Activated T-helper 2 cell treated with anti-CD3 and anti-CD28 coated beads, Interferon-gamma antibody, Interleukin-2, Interleukin-4, amounts not matched to agents 10 μg/mL and 5 μg/mL and 100 μg/mL, durations not matched to agents 14 hours and 24 hours and 36 hours (primary cell): ENCODE measurements at regions of chr6 and their contacts with region 1.

Region 1: DNA sequence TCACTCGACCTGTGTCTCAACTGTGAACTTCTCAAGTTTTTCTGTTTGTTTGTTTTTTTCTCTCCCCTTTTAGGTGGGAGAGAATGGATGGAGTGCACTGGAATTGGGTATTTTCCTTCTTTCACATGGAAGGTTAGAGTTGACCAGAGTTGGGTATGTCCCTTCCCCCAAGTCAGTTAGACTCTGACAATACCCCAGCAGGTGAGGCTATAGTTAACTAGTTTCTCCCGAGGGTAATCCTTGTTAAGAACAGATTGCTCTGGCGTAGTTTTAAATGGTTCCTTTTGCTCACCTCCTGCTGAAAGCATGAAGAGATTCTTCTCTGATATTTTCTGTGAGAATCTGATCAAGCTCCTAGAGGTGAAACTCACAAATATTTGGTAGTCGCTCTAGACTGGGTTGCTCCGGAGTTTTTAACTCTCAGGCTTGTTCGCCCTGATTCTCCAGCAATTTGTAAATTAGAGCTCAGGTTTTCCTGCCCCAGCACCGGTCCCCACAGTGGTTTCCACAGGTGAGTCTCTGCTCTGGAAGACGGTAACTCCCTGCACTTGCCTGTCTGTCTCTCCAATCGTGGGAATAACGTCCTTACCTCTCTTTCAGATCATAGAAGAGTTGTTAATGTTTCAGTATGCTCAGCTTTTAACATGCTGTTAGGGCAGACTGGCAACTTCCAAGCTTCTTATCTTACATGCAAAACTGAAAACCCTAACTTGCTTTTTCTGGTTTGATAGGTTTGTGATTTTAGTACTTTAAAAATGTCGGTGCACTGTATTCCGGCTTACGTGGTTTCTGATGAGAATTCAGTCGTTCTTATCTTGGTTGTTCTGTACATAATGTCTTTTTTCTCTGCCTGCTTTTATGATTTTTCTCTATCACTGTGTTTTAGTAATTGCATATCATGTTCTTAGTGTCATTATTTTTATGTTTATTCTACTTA is 111.2 kb upstream of the HIVEP1 start:
- DNase-seq: no peak
- H3K4me3 Mint-ChIP-seq: peak overlapping the region; percentile 20
- H3K27ac Mint-ChIP-seq: peak overlapping the region; percentile 3
- H3K4me1 Mint-ChIP-seq: peaks cover 28% of the 10 kb centered on the region
- H3K27me3 Mint-ChIP-seq: peaks cover 43% of the 10 kb centered on the region

Region 2: DNA sequence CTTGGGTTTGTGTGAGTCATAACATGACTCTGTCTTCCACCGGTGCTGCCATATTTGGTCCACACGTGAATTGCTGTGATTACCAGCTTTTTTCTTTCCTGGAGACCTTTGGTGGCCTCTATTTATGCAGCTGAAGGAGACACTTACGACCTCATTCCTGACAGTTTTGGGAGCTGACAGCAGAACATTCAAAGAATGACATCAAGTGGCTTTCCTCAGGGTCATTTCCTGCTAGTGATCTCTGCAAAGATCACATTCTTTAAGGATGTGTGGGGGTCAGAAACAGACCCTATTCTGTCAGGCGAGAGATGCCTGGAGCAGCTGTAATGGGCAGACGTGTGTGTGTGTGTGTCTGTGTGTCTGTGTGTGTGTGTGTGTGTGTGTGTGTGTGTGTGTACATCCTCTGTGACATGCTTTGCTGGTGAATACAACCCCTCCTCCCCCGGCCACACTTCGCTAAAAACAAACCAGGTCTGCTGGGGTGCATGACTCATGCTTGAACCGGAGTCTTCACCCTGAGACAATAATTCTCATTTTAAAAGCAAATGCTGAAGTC is 247.8 kb before region 1 on chr6:
- intact Hi-C with region 1: loop called (anchors 5 kb)
- DNase-seq: peak; percentile 31
- H3K4me3 Mint-ChIP-seq: no peak overlapping the region
- H3K27ac Mint-ChIP-seq: no peak overlapping the region
- H3K4me1 Mint-ChIP-seq: peaks cover 11% of the 10 kb centered on the region
- H3K27me3 Mint-ChIP-seq: peaks cover 16% of the 10 kb centered on the region

Region 3: GRCh38 chr6:11912426-11912825 is 11.5 kb after region 1 on chr6:
- intact Hi-C with region 1: loop called (anchors 1 kb)
- DNase-seq: no peak
- H3K4me3 Mint-ChIP-seq: no peak overlapping the region
- H3K27ac Mint-ChIP-seq: no peak overlapping the region
- H3K4me1 Mint-ChIP-seq: peaks cover 19% of the 10 kb centered on the region
- H3K27me3 Mint-ChIP-seq: no peaks in the 10 kb centered on the region

Region 4: DNA sequence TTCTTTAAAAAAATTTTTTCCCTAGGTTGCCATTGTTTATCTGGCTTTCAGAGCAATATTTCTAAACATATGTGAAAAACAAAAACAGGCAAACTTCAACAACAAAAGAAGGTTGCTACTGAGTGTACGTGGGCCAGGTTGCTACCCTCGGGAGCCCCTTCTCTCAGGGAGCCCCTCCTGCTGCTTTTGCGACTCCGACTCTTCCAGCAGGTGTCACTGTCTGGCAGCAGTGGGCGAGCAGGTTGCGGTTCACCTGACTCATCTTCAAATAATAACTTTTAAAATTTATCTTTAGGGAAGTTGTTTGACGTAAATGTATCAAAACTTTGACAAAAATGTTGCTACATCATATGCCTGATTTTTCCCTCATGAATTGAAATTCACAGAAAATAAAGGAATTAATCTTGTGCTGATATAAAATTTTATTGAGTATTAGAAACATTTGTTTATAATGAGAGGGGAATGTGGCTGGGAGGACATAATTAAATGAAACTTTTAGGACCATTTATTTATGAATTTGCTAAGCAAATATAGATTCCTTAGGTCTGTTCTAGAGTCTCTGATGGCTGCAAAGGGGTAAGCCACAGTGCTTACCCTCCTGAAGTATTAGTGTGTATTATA is 250.0 kb after region 1 on chr6:
- intact Hi-C with region 1: no loop called
- DNase-seq: no peak
- H3K4me3 Mint-ChIP-seq: no peak overlapping the region
- H3K27ac Mint-ChIP-seq: no peak overlapping the region
- H3K4me1 Mint-ChIP-seq: peaks cover 25% of the 10 kb centered on the region
- H3K27me3 Mint-ChIP-seq: no peaks in the 10 kb centered on the region

Region 5: GRCh38 chr6:12241493-12242175 is 340.7 kb after region 1 on chr6:
- intact Hi-C with region 1: loop called (anchors 5 kb)
- DNase-seq: no peak
- H3K4me3 Mint-ChIP-seq: no peak overlapping the region
- H3K27ac Mint-ChIP-seq: no peak overlapping the region
- H3K4me1 Mint-ChIP-seq: peaks cover 27% of the 10 kb centered on the region
- H3K27me3 Mint-ChIP-seq: peaks cover 3% of the 10 kb centered on the region